ENCODE measurements at regions of chr2 and their contacts with region 1.

Region 1: GRCh38 chr2:42878581-42878980 is 86.2 kb upstream of the HAAO start:
- DNase-seq: peak; percentile 16
- H3K4me3 ChIP-seq: no peak overlapping the region
- H3K27ac ChIP-seq: peak overlapping the region; percentile 72
- H3K4me1 ChIP-seq: peaks cover 51% of the 10 kb centered on the region
- H3K27me3 ChIP-seq: no peaks in the 10 kb centered on the region
- CTCF ChIP-seq: no peak
- POLR2A ChIP-seq: no peak

Region 2: GRCh38 chr2:42865884-42866881 is 12.4 kb before region 1 on chr2:
- CTCF ChIA-PET with region 1: no interaction called
- POLR2A ChIA-PET with region 1: no interaction called
- dilution Hi-C with region 1: no loop called
- intact Hi-C with region 1: no loop called
- DNase-seq: no peak
- H3K4me3 ChIP-seq: no peak overlapping the region
- H3K27ac ChIP-seq: no peak overlapping the region
- H3K4me1 ChIP-seq: no peaks in the 10 kb centered on the region
- H3K27me3 ChIP-seq: no peaks in the 10 kb centered on the region
- CTCF ChIP-seq: no peak
- POLR2A ChIP-seq: no peak

Region 3: GRCh38 chr2:42897386-42897785 is 18.8 kb after region 1 on chr2:
- CTCF ChIA-PET with region 1: interaction called, 4 read pairs
- POLR2A ChIA-PET with region 1: interaction called, 3 read pairs
- dilution Hi-C with region 1: no loop called
- intact Hi-C with region 1: loop called (anchors 2 kb)
- DNase-seq: no peak
- H3K4me3 ChIP-seq: no peak overlapping the region
- H3K27ac ChIP-seq: no peak overlapping the region
- H3K4me1 ChIP-seq: peaks cover 3% of the 10 kb centered on the region
- H3K27me3 ChIP-seq: no peaks in the 10 kb centered on the region
- CTCF ChIP-seq: no peak
- POLR2A ChIP-seq: no peak

Region 4: GRCh38 chr2:42913280-42913878 is 34.8 kb after region 1 on chr2:
- CTCF ChIA-PET with region 1: interaction called, 6 read pairs
- POLR2A ChIA-PET with region 1: interaction called, 3 read pairs
- dilution Hi-C with region 1: no loop called
- intact Hi-C with region 1: loop called (anchors 1 kb)
- DNase-seq: peak; percentile 95
- H3K4me3 ChIP-seq: no peak overlapping the region
- H3K27ac ChIP-seq: peak overlapping the region; percentile 54
- H3K4me1 ChIP-seq: peaks cover 42% of the 10 kb centered on the region
- H3K27me3 ChIP-seq: no peaks in the 10 kb centered on the region
- CTCF ChIP-seq: no peak
- POLR2A ChIP-seq: peak; percentile 70

Region 5: GRCh38 chr2:42922790-42923579 is 44.4 kb after region 1 on chr2:
- CTCF ChIA-PET with region 1: interaction called, 12 read pairs
- POLR2A ChIA-PET with region 1: interaction called, 3 read pairs
- dilution Hi-C with region 1: no loop called
- intact Hi-C with region 1: loop called (anchors 1 kb)
- DNase-seq: no peak
- H3K4me3 ChIP-seq: no peak overlapping the region
- H3K27ac ChIP-seq: peak overlapping the region; percentile 91
- H3K4me1 ChIP-seq: peaks cover 52% of the 10 kb centered on the region
- H3K27me3 ChIP-seq: no peaks in the 10 kb centered on the region
- CTCF ChIP-seq: no peak
- POLR2A ChIP-seq: no peak

Region 6: DNA sequence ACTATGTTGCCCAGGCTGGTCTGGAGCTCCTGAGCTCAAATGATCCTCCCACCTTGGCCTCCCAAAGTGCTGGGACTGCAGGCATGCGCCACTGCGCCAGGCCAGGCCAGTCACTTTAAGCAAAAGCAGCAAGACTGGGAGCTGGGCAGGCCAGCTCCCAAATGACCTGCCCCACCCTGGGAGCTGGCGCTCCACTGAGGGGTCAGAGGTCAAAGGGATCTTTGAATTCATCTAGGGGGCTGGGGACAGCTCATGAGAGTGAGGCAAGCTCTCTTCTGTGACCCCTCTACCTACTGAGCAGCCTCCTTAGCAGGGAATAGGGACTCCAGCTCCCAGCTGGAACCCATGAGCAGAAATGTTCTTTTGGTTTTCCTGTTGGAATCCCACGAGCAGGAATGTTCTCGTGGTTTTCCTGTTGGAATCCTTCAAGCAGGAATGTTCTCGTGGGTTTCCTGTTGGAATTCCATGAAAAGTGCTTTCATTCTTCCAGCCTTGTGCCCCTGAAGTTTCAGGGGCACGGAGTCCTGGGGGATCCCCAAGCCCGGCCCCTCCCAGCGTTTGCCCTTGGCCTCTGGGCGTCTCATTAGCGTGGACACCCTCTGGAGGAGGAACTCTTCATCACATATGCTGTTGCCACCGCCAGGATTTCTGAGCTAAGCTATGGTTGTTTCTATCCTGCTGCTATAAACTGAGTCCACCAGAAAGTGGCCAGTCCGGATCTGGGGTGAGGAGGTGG is 75.8 kb after region 1 on chr2:
- CTCF ChIA-PET with region 1: interaction called, 3 read pairs
- POLR2A ChIA-PET with region 1: no interaction called
- dilution Hi-C with region 1: no loop called
- intact Hi-C with region 1: loop called (anchors 1 kb)
- DNase-seq: no peak
- H3K4me3 ChIP-seq: no peak overlapping the region
- H3K27ac ChIP-seq: peak overlapping the region; percentile 65
- H3K4me1 ChIP-seq: peaks cover 30% of the 10 kb centered on the region
- H3K27me3 ChIP-seq: no peaks in the 10 kb centered on the region
- CTCF ChIP-seq: no peak
- POLR2A ChIP-seq: no peak

Measured in endothelial cell of umbilical vein (primary cell).